CD14-positive monocyte (primary cell): ENCODE measurements at regions of chr19 and their contacts with region 1.

Region 1: GRCh38 chr19:7145494-7146485 is 76.3 kb downstream of the ZNF557 start:
- DNase-seq: no peak
- H3K4me3 ChIP-seq: no peak overlapping the region
- H3K4me3 Mint-ChIP-seq: no peak overlapping the region
- H3K27ac ChIP-seq: no peak overlapping the region
- H3K27ac Mint-ChIP-seq: peak overlapping the region in 2 of 7 donors; percentile 30 to 66
- H3K4me1 ChIP-seq: no peaks in the 10 kb centered on the region
- H3K4me1 Mint-ChIP-seq: peaks cover 4% of the 10 kb centered on the region
- H3K27me3 ChIP-seq: no peaks in the 10 kb centered on the region
- H3K27me3 Mint-ChIP-seq: peaks cover 0 to 2% (median 0%) of the 10 kb centered on the region in 3 donors
- CTCF ChIP-seq: no peak

Region 2: DNA sequence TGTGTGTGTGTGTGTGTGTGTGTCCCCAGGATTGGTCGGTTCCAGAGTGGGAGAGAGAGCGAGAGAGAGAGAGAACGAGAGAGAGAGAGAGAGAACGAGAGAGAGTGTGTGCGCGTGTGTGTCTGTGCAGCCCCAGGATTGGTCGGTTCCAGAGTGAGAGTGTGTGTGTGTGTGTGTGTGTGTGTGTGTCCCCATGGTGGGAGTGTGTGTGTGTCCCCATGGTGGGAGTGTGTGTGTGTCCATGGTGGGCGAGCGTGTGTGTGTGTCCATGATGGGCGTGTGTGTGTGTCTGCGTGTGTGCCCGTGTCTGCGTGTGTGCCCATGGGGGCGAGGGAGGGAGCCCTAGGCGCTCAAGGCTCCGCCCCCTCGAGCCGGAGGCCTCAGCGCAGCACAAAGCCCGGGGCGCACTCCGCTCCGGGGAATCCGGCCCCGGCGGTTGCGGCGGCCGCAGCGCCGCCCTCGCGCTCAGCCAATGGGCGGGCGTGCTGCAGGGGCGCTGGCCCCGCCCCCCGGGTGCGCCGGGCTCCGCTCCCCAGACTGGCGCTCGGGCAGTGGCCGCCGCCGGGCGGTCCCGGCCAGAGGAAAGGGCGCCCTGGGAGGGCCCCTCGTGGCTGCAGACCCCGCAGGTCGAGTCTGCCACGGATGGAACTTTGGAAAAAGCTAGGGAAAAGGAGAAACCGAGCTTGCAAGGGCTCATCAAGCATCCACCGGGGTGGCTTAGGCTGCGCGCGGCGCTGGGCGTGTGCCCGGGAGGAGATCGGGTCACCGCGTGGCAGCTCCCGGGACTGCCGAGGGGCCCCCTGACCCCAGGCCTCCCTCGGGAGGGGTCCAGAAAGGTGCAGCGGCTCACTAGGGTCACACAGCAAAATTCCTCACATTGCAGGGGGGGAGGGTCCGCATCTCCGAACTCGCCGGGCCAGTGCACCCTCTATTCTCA is 52.2 kb after region 1 on chr19:
- intact Hi-C with region 1: loop called in 1 of 2 experiments (anchors 5 kb)
- DNase-seq: peak; percentile 91 to 94 (median 92)
- H3K4me3 ChIP-seq: peak overlapping the region; percentile 69 to 88 (median 70)
- H3K4me3 Mint-ChIP-seq: peak overlapping the region; percentile 87 to 98
- H3K27ac ChIP-seq: peak overlapping the region; percentile 84 to 87
- H3K27ac Mint-ChIP-seq: peak overlapping the region; percentile 88 to 99 (median 96)
- H3K4me1 ChIP-seq: peaks cover 13 to 21% of the 10 kb centered on the region in 2 donors
- H3K4me1 Mint-ChIP-seq: peaks cover 22% of the 10 kb centered on the region
- H3K27me3 ChIP-seq: peaks cover 0 to 2% of the 10 kb centered on the region in 2 donors
- H3K27me3 Mint-ChIP-seq: peaks cover 0 to 11% (median 6%) of the 10 kb centered on the region in 3 donors
- CTCF ChIP-seq: peak; percentile 45

Region 3: DNA sequence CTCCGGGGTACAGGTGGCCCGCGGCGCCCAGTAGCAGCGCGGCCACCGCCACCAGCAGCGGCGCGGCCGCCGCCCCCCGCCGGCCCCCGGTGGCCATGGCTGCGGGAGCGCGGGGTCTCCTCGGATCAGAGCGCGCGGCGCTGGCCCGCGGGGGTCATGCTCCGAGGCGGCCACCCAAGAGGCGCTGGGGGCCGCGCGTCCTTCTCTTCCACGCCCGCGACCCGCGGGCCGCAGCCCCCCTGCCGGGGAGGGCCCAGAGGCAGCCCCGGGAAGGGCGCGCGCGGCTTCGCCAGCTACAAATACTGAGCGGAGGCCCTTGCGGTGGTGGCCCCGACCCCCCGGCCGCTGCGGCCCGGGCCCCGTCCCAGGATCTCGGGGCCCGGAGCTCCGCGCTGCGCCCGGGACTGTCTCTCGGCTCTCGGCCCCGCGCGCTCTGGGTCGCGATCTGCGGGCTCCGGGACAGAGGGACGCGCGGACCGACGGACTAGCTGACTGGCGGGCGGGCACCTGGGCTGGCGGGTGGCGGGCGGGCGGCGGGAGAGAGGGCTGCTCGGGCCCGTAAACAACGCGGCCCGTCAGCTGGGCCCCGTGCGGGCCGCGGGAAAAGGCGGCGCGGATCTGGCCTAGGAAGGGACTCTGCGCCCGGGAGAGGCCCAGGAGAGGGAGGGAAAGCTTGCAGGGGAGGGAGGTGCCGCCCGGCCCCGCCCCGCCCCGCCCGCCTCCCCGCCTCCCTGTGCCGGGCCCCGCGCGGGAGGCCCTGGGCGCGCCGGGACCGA is 148.2 kb after region 1 on chr19 and contains the start of gene INSR:
- intact Hi-C with region 1: loop called (anchors 2 to 5 kb)
- DNase-seq: peak; percentile 82 to 88 (median 83)
- H3K4me3 ChIP-seq: peak within 1 kb of the TSS; percentile 77 to 92 (median 81)
- H3K4me3 Mint-ChIP-seq: peak within 1 kb of the TSS; percentile 83 to 91
- H3K27ac ChIP-seq: peak within 1 kb of the TSS; percentile 53 to 80
- H3K27ac Mint-ChIP-seq: peak within 1 kb of the TSS; percentile 60 to 92 (median 83)
- H3K4me1 ChIP-seq: peaks cover 16 to 18% of the 10 kb centered on the region in 2 donors
- H3K4me1 Mint-ChIP-seq: peaks cover 38% of the 10 kb centered on the region
- H3K27me3 ChIP-seq: no peaks in the 10 kb centered on the region
- H3K27me3 Mint-ChIP-seq: peaks cover 0 to 2% (median 0%) of the 10 kb centered on the region in 3 donors
- CTCF ChIP-seq: no peak
- polyA plus RNA-seq, gene INSR: 2.9 to 12.4 (median 3.4) TPM

Region 4: DNA sequence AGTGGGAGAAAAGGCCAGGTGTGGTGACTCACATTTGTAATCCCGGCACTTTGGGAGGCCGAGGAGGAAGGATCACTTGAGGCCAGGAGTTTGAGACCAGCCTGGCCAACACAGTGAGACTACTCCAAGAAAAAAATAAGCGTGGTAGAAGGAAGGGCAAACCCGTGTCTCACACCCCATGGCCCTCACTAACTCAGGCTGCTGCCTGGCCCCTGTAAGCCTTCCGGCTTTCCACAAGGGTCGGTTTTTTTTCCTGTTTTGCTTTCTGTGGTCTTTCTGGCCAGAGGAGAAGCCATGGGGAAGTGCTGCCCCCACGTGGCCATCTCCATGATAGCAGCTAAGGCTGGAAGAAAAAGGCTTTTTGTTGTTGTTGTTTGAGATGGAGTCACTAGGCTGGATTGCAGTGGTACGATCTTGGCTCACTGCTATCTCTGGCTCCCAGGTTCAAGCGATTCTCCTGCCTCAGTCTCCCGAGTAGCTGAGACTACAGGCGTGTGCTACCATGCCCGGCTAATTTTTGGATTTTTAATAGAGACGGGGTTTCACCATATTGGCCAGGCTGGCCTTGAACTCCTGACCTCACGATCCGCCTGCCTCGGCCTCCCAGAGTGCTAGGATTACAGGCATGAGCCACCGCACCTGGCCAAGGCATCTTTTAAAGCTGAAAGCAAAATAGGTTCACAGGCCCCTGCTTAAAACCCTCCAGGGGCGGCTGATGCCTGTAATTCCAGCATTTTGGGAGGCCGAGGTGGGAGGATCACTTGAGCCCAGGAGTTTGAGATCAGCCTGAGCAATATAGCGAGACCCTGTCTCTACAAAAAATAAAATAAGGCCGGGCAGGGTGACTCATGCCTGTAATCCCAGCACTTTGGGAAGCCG is 195.4 kb after region 1 on chr19:
- intact Hi-C with region 1: loop called (anchors 2 kb)
- DNase-seq: peak; percentile 71 to 77 (median 73)
- H3K4me3 ChIP-seq: no peak overlapping the region
- H3K4me3 Mint-ChIP-seq: peak overlapping the region; percentile 41 to 51
- H3K27ac ChIP-seq: no peak overlapping the region
- H3K27ac Mint-ChIP-seq: peak overlapping the region in 4 of 7 donors; percentile 10 to 71 (median 38)
- H3K4me1 ChIP-seq: peaks cover 73 to 90% of the 10 kb centered on the region in 2 donors
- H3K4me1 Mint-ChIP-seq: peaks cover 82% of the 10 kb centered on the region
- H3K27me3 ChIP-seq: no peaks in the 10 kb centered on the region
- H3K27me3 Mint-ChIP-seq: peaks cover 2 to 25% (median 2%) of the 10 kb centered on the region in 3 donors
- CTCF ChIP-seq: peak; percentile 84

Region 5: DNA sequence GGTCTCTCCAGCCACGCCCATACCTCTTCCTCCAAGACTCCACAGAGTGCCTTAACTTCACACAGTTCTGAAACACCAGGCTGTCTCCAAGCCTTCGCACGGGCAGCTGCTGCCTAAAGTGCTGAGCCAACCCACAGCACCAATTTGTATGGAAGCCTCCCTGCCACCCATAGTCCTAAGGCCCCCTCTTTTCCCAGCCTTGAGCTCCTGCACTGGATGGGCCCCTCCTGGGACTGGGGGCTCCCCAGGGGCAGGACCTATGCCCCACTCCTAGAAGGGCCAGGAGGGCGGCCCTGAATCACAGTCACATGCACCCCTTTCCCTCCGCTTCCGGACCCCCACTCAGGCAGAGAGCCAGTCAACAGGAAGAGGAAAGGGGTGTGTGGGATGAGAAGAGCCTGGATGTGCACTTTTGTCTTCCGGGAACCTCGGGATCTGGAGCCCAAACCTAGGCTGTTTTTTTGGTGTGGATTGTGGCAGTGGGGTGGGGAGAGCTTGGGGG is 561.2 kb after region 1 on chr19:
- intact Hi-C with region 1: no loop called
- DNase-seq: peak in 2 of 3 donors; percentile 29 to 65
- H3K4me3 ChIP-seq: peak overlapping the region in 1 of 3 experiments; percentile 67
- H3K4me3 Mint-ChIP-seq: peak overlapping the region in 1 of 2 donors; percentile 85
- H3K27ac ChIP-seq: peak overlapping the region; percentile 92 to 98
- H3K27ac Mint-ChIP-seq: peak overlapping the region; percentile 98 to 100 (median 99)
- H3K4me1 ChIP-seq: peaks cover 80 to 84% of the 10 kb centered on the region in 2 donors
- H3K4me1 Mint-ChIP-seq: peaks cover 75% of the 10 kb centered on the region
- H3K27me3 ChIP-seq: no peaks in the 10 kb centered on the region
- H3K27me3 Mint-ChIP-seq: peaks cover 0 to 5% (median 4%) of the 10 kb centered on the region in 3 donors
- CTCF ChIP-seq: no peak